BJ (cell line): ENCODE measurements at regions of chr3 and their contacts with region 1.

Region 1: DNA sequence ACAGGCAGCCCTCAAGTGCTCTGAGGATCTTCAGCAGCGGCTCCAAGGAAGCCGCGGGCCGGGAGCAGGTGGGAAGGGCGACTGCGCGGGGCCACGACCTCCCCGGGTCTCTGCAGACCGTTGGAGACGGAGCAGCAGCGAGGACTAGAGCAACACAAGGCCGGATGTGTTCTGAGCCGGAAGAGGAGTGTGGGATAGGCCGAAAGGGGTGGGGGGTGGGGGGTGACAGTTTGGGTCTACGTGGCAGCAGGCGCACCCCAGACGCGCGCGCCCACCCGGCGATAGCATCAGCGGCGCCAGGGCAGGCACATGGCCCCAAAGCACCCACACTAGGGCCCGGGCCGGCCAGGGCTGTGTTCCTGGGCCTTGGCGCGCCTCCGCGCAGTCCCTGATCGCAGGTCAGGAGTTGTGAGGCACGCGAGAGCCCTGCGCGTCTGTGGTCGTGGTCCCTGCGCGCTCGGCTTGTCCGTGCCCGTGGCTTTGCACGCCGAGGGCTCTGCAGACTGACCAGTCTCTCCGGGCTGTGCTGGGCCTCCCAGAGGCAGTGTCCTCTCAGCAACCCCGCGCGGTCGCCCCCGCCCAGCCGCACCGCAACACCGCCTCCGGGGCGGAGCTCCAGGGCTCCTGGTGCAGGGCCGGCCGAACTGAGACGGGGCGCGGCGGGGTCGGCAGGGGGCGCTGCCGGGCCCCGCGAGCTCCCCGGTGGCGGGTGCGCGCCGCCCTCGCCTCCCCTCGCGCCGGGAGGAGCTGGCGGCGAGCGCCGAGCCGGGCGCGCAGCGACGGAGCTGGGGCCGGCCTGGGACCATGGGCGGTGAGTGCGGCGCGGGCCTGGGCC is at the start of gene PXYLP1:
- DNase-seq: peak; percentile 41
- H3K4me3 ChIP-seq: peak within 1 kb of the TSS; percentile 70
- H3K27me3 ChIP-seq: 0 out of 2 replicates have a peak, but pooled peaks cover 2% of the 10 kb centered on the region
- CTCF ChIP-seq: peak; percentile 24; the same call in 1 of the 2 replicates
- polyA plus RNA-seq, gene PXYLP1: 7.9 and 11.2 TPM in 2 replicates

Region 2: DNA sequence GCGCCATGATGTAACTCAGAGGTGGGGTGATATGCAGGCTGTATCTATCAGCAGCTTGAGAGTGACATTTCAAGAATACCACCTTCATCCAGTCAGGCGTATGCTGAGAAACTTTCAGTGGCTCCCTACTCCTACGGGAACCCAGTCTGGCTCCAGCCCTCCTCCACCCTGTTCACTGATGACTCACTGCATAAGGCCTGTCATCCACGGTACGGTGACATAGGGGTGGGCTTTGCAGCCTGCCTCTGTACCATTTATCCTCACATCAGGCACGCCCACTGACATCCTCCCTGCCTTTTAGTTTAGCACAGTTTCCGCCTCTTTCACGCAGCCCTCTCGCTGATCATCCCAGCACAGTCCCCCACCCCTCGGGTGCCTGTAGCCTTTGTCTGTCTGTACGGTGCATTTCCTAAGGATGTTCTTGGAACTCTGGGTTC is 12.0 kb after region 1 on chr3:
- CTCF ChIA-PET with region 1: interaction called, 17 read pairs
- POLR2A ChIA-PET with region 1: no interaction called
- DNase-seq: no peak
- H3K4me3 ChIP-seq: no peak overlapping the region
- H3K27me3 ChIP-seq: no peaks in the 10 kb centered on the region
- CTCF ChIP-seq: no peak

Region 3: DNA sequence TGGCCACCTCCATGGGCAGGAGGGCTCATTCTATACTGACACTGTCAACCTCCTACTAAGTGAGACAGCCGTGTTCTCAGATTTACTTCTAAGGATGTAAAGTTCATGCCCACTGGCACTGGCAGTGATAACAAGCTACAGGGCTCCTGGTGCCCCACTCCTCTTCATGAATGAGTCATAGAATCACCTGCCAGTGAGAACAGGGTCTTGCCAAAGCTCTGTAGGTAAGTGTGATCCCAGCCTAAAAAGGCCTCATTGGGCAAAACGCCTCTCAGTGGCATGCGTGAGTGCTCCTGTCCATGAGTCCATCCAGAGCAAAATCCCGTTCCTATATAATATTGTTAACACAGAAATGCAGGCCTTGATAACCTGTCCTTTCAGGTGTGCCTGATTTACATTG is 17.7 kb after region 1 on chr3:
- CTCF ChIA-PET with region 1: interaction called, 15 read pairs
- POLR2A ChIA-PET with region 1: no interaction called
- DNase-seq: no peak
- H3K4me3 ChIP-seq: no peak overlapping the region
- H3K27me3 ChIP-seq: no peaks in the 10 kb centered on the region; the same call in 1 of the 2 replicates
- CTCF ChIP-seq: no peak

Region 4: DNA sequence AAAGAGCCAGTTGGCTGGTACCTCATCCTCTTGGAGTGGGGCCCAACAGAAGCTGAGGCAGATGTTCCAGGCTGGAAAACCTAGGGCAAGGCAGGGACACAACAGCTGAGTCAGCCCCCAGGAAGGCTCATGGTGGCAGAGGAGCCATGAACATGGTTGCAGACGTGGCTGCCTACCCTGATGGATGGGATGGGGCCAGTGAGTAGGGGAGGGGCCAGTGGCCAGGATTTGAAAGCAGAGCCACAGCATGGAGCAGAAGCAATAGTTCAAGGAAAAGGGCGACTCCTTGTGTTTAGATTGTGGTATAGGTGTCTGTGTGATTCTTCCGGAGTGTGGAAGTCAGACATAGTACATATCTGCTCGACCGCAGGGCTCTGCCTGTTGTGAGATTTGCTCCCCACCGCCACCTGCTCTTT is 24.5 kb after region 1 on chr3:
- CTCF ChIA-PET with region 1: interaction called, 13 read pairs
- POLR2A ChIA-PET with region 1: no interaction called
- DNase-seq: no peak
- H3K4me3 ChIP-seq: no peak overlapping the region
- H3K27me3 ChIP-seq: no peaks in the 10 kb centered on the region; the same call in 1 of the 2 replicates
- CTCF ChIP-seq: peak; percentile 26; the same call in 1 of the 2 replicates

Region 5: DNA sequence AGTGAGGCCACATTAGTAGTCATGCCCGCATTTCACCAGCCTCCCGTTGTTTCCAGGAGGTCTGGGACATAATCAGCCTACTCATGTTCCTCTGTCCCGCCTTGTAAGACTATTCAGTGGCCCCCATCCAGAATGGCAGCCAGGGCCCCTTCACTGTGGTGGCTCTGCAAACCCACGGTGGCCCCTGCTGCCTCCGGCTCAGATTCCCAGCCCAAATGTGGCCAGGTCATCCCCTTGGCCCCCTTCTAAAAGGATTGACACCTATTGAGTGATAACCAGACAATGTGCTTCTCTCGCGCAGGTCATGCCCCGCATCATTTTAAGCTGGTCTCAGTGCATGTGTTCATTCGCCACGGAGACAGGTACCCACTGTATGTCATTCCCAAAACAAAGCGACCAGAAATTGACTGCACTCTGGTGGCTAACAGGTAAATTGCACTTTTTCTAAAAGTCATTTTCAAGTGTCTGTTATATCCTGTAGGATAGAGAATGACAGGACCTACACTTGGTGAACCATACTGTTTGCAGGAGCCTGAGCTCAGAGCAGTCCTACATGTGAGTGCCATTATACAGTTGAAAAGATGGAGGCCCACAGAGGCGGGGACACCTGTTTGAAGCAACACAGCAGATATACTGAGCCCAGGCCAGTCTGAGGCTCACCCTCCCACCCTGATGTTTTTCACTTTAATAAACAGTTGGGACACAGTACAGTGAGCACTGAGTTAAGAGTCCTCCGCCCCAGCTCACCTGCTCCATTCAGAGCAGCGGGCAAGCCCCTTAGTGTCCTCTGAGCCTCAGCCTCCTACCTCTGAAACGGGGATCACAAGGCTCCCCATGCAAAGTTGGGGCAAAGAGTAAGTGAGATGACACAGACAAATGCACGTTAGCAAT is 48.0 kb after region 1 on chr3:
- CTCF ChIA-PET with region 1: interaction called, 12 read pairs
- POLR2A ChIA-PET with region 1: no interaction called
- DNase-seq: no peak
- H3K4me3 ChIP-seq: no peak overlapping the region
- H3K27me3 ChIP-seq: 0 out of 2 replicates have a peak, but pooled peaks cover 2% of the 10 kb centered on the region
- CTCF ChIP-seq: peak; percentile 52